Activated CD8-positive, alpha-beta memory T cell treated with anti-CD3 and anti-CD28 coated beads, Interleukin-2, amount 10 ng/mL, durations not matched to agents 7 days and 5 days (primary cell): ENCODE measurements at regions of chr19 and their contacts with region 1.

Region 1: DNA sequence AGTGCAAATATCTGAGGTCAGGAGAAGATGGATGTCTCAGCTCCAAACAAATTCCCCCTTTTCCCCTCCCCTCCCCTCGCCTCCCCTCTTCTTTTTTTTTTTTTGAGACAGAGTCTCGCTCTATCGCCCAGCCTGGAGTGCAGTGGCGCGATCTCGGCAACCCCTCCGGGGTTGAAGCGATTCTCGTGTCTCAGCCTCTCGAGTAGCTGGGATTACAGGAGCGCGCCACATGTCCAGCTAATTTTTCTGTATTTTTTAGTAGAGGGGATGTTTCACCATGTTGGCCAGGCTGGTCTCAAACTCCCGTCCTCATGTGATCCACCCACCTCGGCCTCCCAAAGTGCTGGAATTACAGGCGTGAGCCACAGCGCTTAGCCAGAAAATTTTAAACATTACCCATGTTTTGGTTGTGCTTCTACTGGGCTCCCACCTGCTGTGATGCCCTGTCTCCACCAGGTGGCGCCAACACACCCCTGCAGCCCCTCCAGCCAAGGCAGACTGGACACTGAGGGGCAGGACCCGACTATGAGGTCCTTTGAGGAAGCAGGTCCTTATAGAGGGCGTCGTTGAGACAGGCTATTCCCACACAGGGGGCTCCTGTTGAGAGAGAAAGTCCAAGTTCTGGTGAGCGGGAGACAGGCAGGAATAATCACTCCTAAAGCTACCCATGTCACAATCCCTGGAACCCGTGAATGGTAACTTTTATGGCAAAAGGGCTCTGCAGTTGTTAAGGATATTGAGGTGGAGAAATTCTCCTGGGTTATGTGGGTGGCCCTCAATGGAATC is 6.3 kb downstream of the ERICH4 start:
- DNase-seq: peak; percentile 83
- ATAC-seq: peak; percentile 93
- H3K4me3 Mint-ChIP-seq: peak overlapping the region; percentile 63
- H3K27ac Mint-ChIP-seq: no peak overlapping the region
- H3K4me1 Mint-ChIP-seq: peaks cover 18% of the 10 kb centered on the region
- H3K27me3 Mint-ChIP-seq: peaks cover 11% of the 10 kb centered on the region

Region 2: GRCh38 chr19:41350735-41351338 is 98.4 kb before region 1 on chr19:
- CTCF ChIA-PET with region 1: no interaction called
- DNase-seq: no peak
- ATAC-seq: no peak
- H3K4me3 Mint-ChIP-seq: peak overlapping the region; percentile 99
- H3K27ac Mint-ChIP-seq: peak overlapping the region; percentile 93
- H3K4me1 Mint-ChIP-seq: peaks cover 47% of the 10 kb centered on the region
- H3K27me3 Mint-ChIP-seq: no peaks in the 10 kb centered on the region

Region 3: GRCh38 chr19:41484822-41485221 is 35.5 kb after region 1 on chr19:
- CTCF ChIA-PET with region 1: no interaction called
- DNase-seq: no peak
- ATAC-seq: no peak
- H3K4me3 Mint-ChIP-seq: no peak overlapping the region
- H3K27ac Mint-ChIP-seq: no peak overlapping the region
- H3K4me1 Mint-ChIP-seq: no peaks in the 10 kb centered on the region
- H3K27me3 Mint-ChIP-seq: peaks cover 72% of the 10 kb centered on the region

Region 4: GRCh38 chr19:41554907-41555306 is 105.6 kb after region 1 on chr19:
- CTCF ChIA-PET with region 1: interaction called, 43 read pairs
- DNase-seq: peak; percentile 75
- ATAC-seq: peak; percentile 60
- H3K4me3 Mint-ChIP-seq: peak overlapping the region; percentile 59
- H3K27ac Mint-ChIP-seq: peak overlapping the region; percentile 89
- H3K4me1 Mint-ChIP-seq: peaks cover 70% of the 10 kb centered on the region
- H3K27me3 Mint-ChIP-seq: no peaks in the 10 kb centered on the region

Region 5: DNA sequence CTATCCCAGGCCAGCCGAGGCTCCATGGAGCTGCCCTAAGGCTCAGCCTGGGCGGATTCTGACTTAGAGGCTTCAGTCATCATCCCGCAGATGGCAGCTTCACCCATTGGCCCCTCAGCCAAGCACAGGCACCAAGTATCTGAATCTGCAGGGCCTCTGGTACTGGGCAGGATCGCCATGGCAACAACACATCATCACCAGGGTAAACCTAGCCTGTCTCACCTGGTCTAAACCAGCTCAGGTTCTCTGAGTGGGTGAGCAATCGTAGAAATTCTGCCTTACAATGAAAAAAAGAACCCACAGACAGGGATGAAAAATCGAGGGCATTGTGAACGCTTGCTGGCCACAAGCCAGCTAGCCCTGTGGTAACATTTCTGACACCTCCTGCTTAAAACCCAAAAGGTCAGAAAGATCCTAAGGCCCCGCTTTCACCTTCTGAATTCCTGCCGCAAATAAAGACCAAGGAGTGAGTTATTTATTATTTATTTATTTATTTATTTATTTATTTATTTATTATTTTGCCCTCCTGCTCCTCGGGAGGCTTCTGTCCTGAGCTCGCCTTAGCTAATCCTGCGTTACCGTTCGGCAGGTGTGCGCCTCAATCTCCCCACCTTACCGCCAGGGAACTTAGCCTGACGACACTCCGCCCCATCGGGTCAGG is 114.7 kb after region 1 on chr19:
- CTCF ChIA-PET with region 1: interaction called, 132 read pairs
- DNase-seq: no peak
- ATAC-seq: peak; percentile 52
- H3K4me3 Mint-ChIP-seq: no peak overlapping the region
- H3K27ac Mint-ChIP-seq: no peak overlapping the region
- H3K4me1 Mint-ChIP-seq: peaks cover 52% of the 10 kb centered on the region
- H3K27me3 Mint-ChIP-seq: no peaks in the 10 kb centered on the region

Region 6: GRCh38 chr19:41570639-41571112 is 121.4 kb after region 1 on chr19:
- CTCF ChIA-PET with region 1: interaction called, 132 read pairs
- DNase-seq: peak; percentile 89
- ATAC-seq: peak; percentile 96
- H3K4me3 Mint-ChIP-seq: no peak overlapping the region
- H3K27ac Mint-ChIP-seq: peak overlapping the region; percentile 63
- H3K4me1 Mint-ChIP-seq: peaks cover 22% of the 10 kb centered on the region
- H3K27me3 Mint-ChIP-seq: no peaks in the 10 kb centered on the region

Region 7: GRCh38 chr19:41597600-41598041 is 148.3 kb after region 1 on chr19:
- CTCF ChIA-PET with region 1: interaction called, 56 read pairs
- DNase-seq: peak; percentile 87
- ATAC-seq: peak; percentile 75
- H3K4me3 Mint-ChIP-seq: no peak overlapping the region
- H3K27ac Mint-ChIP-seq: no peak overlapping the region
- H3K4me1 Mint-ChIP-seq: peaks cover 17% of the 10 kb centered on the region
- H3K27me3 Mint-ChIP-seq: peaks cover 48% of the 10 kb centered on the region

Region 8: GRCh38 chr19:41688098-41688497 is 238.8 kb after region 1 on chr19 and contains the start of gene CEACAM7:
- CTCF ChIA-PET with region 1: no interaction called
- DNase-seq: no peak
- ATAC-seq: no peak
- H3K4me3 Mint-ChIP-seq: no peak within 1 kb of the TSS
- H3K27ac Mint-ChIP-seq: no peak within 1 kb of the TSS
- H3K4me1 Mint-ChIP-seq: no peaks in the 10 kb centered on the region
- H3K27me3 Mint-ChIP-seq: peaks cover 39% of the 10 kb centered on the region
- total RNA-seq, gene CEACAM7: not detected